Endothelial cell of umbilical vein (primary cell): ENCODE measurements at regions of chr20 and their contacts with region 1.

Region 1: GRCh38 chr20:57622579-57623377 is 2.6 kb upstream of the ZBP1 start:
- DNase-seq: peak; percentile 58
- H3K4me3 ChIP-seq: no peak overlapping the region
- H3K27ac ChIP-seq: no peak overlapping the region
- H3K4me1 ChIP-seq: peaks cover 7% of the 10 kb centered on the region
- H3K27me3 ChIP-seq: no peaks in the 10 kb centered on the region
- CTCF ChIP-seq: peak; percentile 69 to 92
- POLR2A ChIP-seq: no peak

Region 2: GRCh38 chr20:57493091-57493615 is 129.6 kb before region 1 on chr20:
- CTCF ChIA-PET with region 1: no interaction called
- POLR2A ChIA-PET with region 1: no interaction called
- dilution Hi-C with region 1: no loop called
- intact Hi-C with region 1: no loop called
- DNase-seq: no peak
- H3K4me3 ChIP-seq: no peak overlapping the region
- H3K27ac ChIP-seq: no peak overlapping the region
- H3K4me1 ChIP-seq: peaks cover 2% of the 10 kb centered on the region
- H3K27me3 ChIP-seq: peaks cover 7 to 16% of the 10 kb centered on the region in 2 experiments
- CTCF ChIP-seq: no peak
- POLR2A ChIP-seq: no peak

Region 3: DNA sequence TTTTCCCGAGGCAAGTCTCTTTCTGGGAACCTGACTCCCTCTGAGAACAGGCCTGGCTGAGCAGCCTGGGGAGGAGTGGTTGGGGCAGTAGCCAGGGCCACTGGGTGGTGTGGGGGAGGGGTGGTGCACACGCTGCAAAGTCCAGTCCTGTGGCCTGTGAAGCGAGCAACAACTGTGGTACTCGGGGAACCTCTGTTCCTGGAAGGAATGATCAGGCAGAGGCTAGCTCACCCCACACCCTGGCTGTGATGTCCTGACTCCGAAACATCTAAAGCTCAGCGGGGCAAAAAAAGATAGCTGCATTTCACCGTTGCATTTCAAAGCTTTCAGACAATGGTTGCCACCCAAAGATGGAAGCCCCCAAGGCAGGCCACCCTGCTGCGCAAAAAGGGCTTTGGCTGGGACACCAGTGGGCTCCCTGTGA is 36.4 kb before region 1 on chr20:
- CTCF ChIA-PET with region 1: no interaction called
- POLR2A ChIA-PET with region 1: no interaction called
- dilution Hi-C with region 1: no loop called
- intact Hi-C with region 1: no loop called
- DNase-seq: no peak
- H3K4me3 ChIP-seq: no peak overlapping the region
- H3K27ac ChIP-seq: no peak overlapping the region
- H3K4me1 ChIP-seq: no peaks in the 10 kb centered on the region
- H3K27me3 ChIP-seq: peaks cover 0 to 2% of the 10 kb centered on the region in 2 experiments
- CTCF ChIP-seq: no peak
- POLR2A ChIP-seq: no peak

Region 4: GRCh38 chr20:57788001-57788781 is 165.4 kb after region 1 on chr20:
- CTCF ChIA-PET with region 1: no interaction called
- POLR2A ChIA-PET with region 1: no interaction called
- dilution Hi-C with region 1: no loop called
- intact Hi-C with region 1: no loop called
- DNase-seq: no peak
- H3K4me3 ChIP-seq: no peak overlapping the region
- H3K27ac ChIP-seq: no peak overlapping the region
- H3K4me1 ChIP-seq: no peaks in the 10 kb centered on the region
- H3K27me3 ChIP-seq: no peaks in the 10 kb centered on the region
- CTCF ChIP-seq: no peak
- POLR2A ChIP-seq: no peak

Region 5: GRCh38 chr20:57991211-57991881 is 368.6 kb after region 1 on chr20:
- CTCF ChIA-PET with region 1: interaction called, 10 read pairs
- POLR2A ChIA-PET with region 1: no interaction called
- dilution Hi-C with region 1: no loop called
- intact Hi-C with region 1: no loop called
- DNase-seq: no peak
- H3K4me3 ChIP-seq: no peak overlapping the region
- H3K27ac ChIP-seq: no peak overlapping the region
- H3K4me1 ChIP-seq: no peaks in the 10 kb centered on the region
- H3K27me3 ChIP-seq: peaks cover 0 to 4% of the 10 kb centered on the region in 2 experiments
- CTCF ChIP-seq: no peak
- POLR2A ChIP-seq: no peak

Region 6: DNA sequence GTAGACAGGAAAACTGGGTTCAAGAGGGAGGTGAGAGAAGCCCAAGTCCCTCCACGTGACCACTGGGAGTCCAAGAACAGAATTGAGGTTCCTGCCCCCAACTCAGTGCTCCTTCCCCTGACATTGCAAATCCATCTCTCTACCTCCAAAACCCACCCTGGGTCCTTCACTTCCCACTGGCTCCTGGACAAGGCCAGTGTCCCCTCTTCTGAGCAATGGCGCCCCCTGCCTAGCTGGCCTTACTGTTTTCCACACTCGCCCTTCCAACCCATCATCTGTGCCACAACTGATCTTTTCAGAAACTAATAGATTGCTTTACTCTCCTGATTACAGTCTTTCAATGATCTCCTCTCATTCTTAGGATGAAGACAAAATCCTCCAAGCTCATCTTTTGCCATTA is 405.3 kb after region 1 on chr20:
- CTCF ChIA-PET with region 1: no interaction called
- POLR2A ChIA-PET with region 1: no interaction called
- dilution Hi-C with region 1: no loop called
- intact Hi-C with region 1: loop called (anchors 2 kb)
- DNase-seq: no peak
- H3K4me3 ChIP-seq: no peak overlapping the region
- H3K27ac ChIP-seq: no peak overlapping the region
- H3K4me1 ChIP-seq: no peaks in the 10 kb centered on the region
- H3K27me3 ChIP-seq: peaks cover 0 to 1% of the 10 kb centered on the region in 2 experiments
- CTCF ChIP-seq: peak; percentile 4 to 18
- POLR2A ChIP-seq: no peak